ENCODE measurements at regions of chr11 and their contacts with region 1.

Region 1: DNA sequence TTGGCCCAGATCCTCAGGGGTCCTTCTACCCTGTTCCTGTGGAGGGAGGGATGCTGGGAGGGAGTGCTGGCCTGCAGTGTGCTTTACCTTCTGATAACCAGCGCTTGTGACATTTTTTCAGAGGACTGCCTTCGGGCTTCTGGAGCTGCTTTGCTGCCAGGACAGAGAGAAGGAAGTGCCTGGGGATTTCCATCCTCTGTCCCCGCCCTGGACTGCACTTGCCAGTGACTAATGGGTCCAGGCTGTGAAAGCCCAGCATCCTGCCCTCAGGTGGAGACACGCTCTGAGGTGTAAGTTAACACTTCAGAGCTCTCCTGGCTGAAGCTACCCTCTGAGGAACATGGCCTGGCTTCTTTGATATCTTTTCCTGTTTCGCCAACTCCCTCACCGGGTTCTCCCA is 158.7 kb upstream of the SYT13 start:
- DNase-seq: no peak

Region 2: DNA sequence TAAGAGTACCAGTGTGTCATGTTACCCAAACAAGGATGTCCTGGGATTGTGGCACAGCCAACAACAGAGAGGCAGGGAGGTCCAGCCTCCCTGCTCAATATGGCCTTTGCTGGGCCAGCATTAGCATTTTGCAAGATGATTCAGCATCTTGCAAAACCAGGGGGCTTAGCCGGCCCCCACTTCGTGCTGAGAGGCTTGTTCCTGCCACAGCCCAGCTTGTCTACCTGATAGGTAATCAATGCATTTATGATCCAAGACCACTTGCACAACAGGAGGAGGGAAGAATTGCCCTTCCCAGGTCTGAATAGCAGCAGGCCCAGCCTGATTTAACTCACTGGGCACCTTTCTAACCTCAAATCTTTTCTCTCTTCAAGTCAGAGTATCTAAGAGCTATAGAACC is 30.4 kb after region 1 on chr11:
- intact Hi-C with region 1: loop called in 1 of 2 experiments (anchors 1 kb)
- DNase-seq: no peak

Region 3: GRCh38 chr11:45489281-45489905 is 44.6 kb after region 1 on chr11:
- intact Hi-C with region 1: loop called in 1 of 2 experiments (anchors 1 kb)
- DNase-seq: no peak